Activated CD4-positive, alpha-beta T cell treated with anti-CD3 and anti-CD28 coated beads, Interleukin-2, amount 10 ng/mL, durations not matched to agents 24 days and 14 days (primary cell): ENCODE measurements at regions of chr3 and their contacts with region 1.

Region 1: GRCh38 chr3:186783073-186783730 is at the start of gene EIF4A2:
- DNase-seq: peak; percentile 97
- H3K4me3 Mint-ChIP-seq: peak within 1 kb of the TSS; percentile 100
- H3K27ac Mint-ChIP-seq: peak within 1 kb of the TSS; percentile 100
- H3K4me1 Mint-ChIP-seq: peaks cover 37% of the 10 kb centered on the region
- H3K27me3 Mint-ChIP-seq: peaks cover 3% of the 10 kb centered on the region
- total RNA-seq, gene EIF4A2: 502 and 507 TPM in 2 replicates

Region 2: DNA sequence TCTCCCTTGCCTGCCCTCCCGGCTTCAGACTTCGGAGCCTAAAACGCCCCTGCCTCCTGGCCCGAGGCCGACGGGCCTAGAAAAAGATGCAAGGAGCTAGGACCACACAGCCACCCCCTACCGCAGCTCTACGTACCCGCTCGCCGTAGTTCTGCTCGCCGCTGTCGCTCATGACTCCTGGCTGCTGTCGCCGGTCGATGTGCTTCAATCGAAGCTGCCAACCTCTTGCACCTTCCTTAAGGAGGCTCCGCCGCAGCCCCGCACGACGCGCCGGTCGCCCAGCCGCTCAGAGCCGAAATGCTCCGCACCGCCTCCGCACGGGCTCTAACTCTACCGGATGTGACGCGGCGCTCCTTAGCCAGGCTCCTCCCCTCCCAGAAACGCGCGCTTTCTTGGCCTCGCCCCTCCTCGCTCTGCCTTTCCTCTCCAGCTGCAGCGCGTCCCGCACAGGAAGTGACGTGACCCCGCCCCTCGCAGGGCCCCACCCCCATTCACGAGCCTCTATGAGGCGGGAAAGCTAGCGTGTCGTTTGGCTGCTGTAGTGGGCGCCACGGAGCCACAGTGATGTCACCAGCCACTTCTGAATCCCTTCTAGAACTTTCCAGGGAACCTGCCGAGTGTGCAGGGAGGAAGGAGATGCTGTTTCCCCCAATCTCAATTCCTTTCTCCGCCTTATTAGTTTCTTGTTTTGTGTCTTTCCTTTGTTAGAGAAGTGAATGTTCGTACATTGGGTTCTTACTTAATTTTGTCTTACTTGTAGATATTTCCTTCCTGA is 845.3 kb before region 1 on chr3 and contains the start of gene TRA2B:
- intact Hi-C with region 1: loop called (anchors 2 kb)
- DNase-seq: peak; percentile 100
- H3K4me3 Mint-ChIP-seq: peak within 1 kb of the TSS; percentile 98
- H3K27ac Mint-ChIP-seq: peak within 1 kb of the TSS; percentile 100
- H3K4me1 Mint-ChIP-seq: peaks cover 33% of the 10 kb centered on the region
- H3K27me3 Mint-ChIP-seq: peaks cover 4% of the 10 kb centered on the region
- total RNA-seq, gene TRA2B: 311 and 314 TPM in 2 replicates

Region 3: GRCh38 chr3:186570096-186570940 is 212.9 kb before region 1 on chr3 and contains the start of gene DNAJB11:
- intact Hi-C with region 1: loop called (anchors 1 kb)
- DNase-seq: peak; percentile 99
- H3K4me3 Mint-ChIP-seq: peak within 1 kb of the TSS; percentile 90
- H3K27ac Mint-ChIP-seq: peak within 1 kb of the TSS; percentile 99
- H3K4me1 Mint-ChIP-seq: peaks cover 47% of the 10 kb centered on the region
- H3K27me3 Mint-ChIP-seq: no peaks in the 10 kb centered on the region
- total RNA-seq, gene DNAJB11: 74.0 and 77.7 TPM in 2 replicates

Region 4: DNA sequence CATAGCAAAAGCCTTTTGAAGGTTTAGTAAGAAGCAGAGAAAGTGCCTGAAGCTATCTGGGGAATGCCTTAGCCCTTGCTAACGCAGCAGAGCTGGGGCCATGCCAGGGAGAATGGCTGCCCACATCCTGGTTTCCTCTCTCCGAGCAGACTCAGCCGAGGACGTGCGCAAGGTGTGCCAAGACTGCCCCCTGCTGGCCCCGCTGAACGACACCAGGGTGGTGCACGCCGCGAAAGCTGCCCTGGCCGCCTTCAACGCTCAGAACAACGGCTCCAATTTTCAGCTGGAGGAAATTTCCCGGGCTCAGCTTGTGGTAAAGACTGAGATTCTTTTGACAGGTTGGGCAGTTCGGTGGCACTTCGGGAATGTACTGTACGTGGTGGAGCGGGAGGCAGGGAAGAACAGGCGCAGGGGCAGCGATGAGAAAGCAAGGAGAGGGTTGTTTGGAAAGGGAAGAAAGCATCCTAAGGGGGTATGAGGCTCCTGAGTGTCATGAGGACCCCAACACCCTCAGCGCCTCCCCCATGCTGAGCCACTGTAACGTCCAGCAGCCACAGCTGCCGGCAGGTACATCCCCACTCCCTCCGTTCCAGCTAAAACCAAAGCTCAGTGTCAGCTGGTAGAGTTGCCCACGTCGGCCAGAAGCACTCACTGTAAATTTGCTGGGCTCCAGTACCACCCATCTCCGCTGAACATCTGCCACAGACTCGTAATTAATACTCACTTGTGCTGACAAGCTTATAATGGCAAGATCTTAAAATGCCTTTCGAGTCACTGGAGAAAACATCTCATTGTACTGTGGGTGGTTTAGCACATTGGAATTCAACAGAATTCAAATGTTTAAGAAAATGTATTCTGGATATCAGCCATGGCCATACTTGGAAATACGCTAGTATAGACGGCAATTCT is 165.9 kb before region 1 on chr3:
- intact Hi-C with region 1: loop called (anchors 10 kb)
- DNase-seq: peak; percentile 94
- H3K4me3 Mint-ChIP-seq: peak overlapping the region; percentile 74
- H3K27ac Mint-ChIP-seq: peak overlapping the region; percentile 68
- H3K4me1 Mint-ChIP-seq: peaks cover 21% of the 10 kb centered on the region
- H3K27me3 Mint-ChIP-seq: peaks cover 30% of the 10 kb centered on the region

Region 5: DNA sequence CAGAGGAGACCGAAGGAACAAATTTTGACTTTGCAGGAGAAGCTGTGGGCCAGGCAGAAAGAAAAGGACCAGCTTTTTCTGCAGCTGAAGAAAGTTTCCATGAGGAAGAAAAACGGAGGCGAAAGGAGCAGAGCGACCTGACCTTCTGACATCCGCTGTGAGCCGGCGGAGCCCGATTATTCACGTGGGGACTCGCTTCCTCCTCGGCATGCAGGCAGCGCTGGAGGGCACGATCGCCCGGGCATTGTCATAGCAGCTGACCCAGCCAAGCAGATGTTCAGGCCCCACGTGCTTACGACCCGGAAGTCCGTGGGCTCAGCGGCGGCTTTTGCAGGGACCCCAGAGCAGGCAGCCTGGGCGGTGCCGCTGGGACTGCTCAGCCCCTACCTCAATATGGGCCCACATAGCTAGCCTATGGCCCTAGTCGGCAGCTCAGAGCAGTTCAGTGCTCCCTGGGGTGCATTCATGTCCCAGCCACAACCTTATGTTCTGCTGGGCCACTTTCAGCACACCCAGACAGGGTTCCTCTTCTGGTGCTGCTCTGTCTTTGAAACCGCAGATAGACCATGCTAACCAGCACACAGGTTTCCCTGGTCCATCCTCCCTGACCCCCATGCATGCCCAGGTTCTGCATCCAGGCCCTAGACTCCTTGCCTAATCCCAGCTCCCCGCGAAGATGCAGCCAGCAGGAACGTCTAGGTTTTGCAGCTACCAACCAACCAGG is 10.3 kb before region 1 on chr3:
- intact Hi-C with region 1: loop called (anchors 1 kb)
- DNase-seq: peak; percentile 88
- H3K4me3 Mint-ChIP-seq: peak overlapping the region; percentile 90
- H3K27ac Mint-ChIP-seq: peak overlapping the region; percentile 97
- H3K4me1 Mint-ChIP-seq: peaks cover 9% of the 10 kb centered on the region
- H3K27me3 Mint-ChIP-seq: peaks cover 3% of the 10 kb centered on the region

Region 6: DNA sequence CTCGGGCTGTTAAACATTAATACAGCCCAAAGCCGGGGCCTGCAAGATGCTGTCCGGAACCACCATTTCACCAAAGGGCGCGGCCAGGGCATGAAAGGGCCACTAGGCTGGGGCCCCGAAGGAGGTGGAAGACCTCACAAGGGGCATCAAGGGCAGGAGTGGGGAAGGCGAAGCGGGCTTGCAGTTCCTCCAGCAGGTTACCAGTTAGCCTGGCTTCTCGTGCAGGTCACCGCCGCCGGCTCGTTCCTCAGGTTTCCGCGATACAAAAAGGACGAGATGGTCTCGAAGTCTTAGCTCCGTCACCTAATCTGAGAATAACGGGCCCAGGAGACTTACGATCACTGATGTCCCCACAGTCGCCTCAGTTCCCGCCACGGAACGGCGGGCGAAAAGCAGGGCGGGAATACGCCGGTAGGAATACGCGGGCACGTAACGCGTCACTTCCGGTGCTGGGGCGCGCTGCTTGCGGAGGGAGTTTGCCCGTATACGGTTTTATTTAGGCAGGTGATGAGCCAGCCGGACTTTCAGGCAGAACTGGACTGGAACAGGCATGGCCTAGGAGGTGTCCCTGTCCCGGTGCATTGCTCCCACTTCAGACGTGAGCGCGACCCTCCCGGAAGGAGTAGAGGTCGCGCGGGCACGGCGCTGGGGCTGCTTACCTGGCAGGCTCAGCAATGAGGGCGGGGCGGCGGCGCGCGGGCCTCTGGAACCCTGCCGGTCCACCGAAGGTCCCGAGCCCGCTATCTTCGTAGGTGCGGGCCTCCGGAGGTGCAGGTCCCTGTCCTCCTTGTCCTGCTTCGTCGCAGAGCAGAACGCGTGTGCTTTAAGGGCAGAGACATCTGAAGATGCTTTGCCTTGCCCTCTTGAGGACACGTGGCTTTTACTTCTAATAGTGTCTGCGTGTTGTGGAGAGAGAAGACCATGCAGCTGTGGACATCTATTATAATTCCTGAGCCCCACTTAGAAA is 23.2 kb after region 1 on chr3 and contains the start of gene RFC4:
- intact Hi-C with region 1: loop called (anchors 1 kb)
- DNase-seq: peak; percentile 96
- H3K4me3 Mint-ChIP-seq: peak within 1 kb of the TSS; percentile 93
- H3K27ac Mint-ChIP-seq: peak within 1 kb of the TSS; percentile 91
- H3K4me1 Mint-ChIP-seq: peaks cover 24% of the 10 kb centered on the region
- H3K27me3 Mint-ChIP-seq: no peaks in the 10 kb centered on the region
- total RNA-seq, gene RFC4: 116 and 119 TPM in 2 replicates

Region 7: GRCh38 chr3:186826976-186827731 is 44.0 kb after region 1 on chr3:
- intact Hi-C with region 1: loop called (anchors 2 kb)
- DNase-seq: peak; percentile 97
- H3K4me3 Mint-ChIP-seq: peak overlapping the region; percentile 98
- H3K27ac Mint-ChIP-seq: peak overlapping the region; percentile 90
- H3K4me1 Mint-ChIP-seq: peaks cover 22% of the 10 kb centered on the region
- H3K27me3 Mint-ChIP-seq: peaks cover 44% of the 10 kb centered on the region

Region 8: DNA sequence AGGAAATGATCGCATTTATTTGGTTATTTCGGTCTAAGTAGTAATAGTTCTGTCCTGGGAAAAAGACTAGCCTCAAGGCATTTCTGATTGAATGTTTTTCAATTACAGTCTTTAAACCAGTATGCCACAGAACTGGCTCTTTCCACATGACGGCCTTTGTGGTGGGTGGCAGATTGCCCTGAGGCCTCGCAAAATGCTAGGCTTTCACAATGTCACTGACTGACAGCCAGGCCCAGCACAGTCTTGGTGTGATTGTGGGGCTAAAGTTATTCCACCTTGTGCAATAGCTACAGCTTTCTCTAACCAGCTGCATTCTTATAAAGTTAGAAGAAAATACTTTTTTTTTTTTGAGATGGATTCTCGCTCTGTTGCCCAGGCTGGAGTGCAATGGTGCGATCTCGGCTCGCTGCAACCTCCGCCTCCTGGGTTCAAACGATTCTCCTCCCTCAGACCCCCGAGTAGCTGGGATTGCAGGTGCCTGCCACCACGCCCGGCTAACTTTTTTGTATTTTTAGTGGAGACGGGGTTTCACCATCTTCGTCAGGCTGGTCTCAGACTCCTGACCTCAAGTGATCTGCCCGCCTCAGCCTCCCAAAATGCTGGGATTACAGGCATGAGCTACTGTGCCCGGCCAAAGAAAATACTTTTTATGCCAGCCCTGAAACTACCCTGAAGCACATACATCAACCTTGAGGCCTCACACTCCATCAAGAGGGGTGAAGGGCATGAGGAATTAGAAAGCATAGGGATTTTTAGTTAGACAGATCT is 56.9 kb after region 1 on chr3:
- intact Hi-C with region 1: no loop called
- DNase-seq: no peak
- H3K4me3 Mint-ChIP-seq: no peak overlapping the region
- H3K27ac Mint-ChIP-seq: no peak overlapping the region
- H3K4me1 Mint-ChIP-seq: no peaks in the 10 kb centered on the region
- H3K27me3 Mint-ChIP-seq: peaks cover 17% of the 10 kb centered on the region

Region 9: GRCh38 chr3:186852994-186853393 is 69.8 kb after region 1 on chr3:
- intact Hi-C with region 1: no loop called
- DNase-seq: peak; percentile 48
- H3K4me3 Mint-ChIP-seq: no peak overlapping the region
- H3K27ac Mint-ChIP-seq: no peak overlapping the region
- H3K4me1 Mint-ChIP-seq: peaks cover 12% of the 10 kb centered on the region
- H3K27me3 Mint-ChIP-seq: peaks cover under 1% of the 10 kb centered on the region

Region 10: DNA sequence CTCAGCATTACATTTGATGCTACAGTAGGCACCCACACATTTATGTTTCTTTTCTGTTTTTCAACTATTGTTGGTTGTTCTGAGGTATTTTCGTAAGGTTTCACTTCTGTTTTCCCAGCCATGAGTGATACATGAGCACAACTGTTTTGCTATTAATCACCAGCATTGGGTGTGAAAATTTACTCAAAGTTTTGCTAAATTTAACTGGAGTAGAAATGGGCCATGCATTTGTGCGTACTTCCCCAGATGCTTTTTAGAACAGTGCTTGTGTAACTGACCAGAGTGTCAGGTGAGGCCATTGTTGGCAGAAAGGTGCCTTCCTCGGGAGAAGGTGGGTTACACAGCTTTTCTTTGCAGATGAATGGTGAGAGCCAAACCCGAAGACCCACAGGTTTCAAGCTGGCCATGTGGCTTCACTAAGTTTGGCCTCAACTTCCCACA is 217.5 kb after region 1 on chr3:
- intact Hi-C with region 1: no loop called
- DNase-seq: peak; percentile 78
- H3K4me3 Mint-ChIP-seq: peak overlapping the region; percentile 63
- H3K27ac Mint-ChIP-seq: peak overlapping the region; percentile 87
- H3K4me1 Mint-ChIP-seq: peaks cover 56% of the 10 kb centered on the region
- H3K27me3 Mint-ChIP-seq: no peaks in the 10 kb centered on the region